ENCODE measurements at regions of chr1 and their contacts with region 1.

Region 1: GRCh38 chr1:84506002-84506728 is at the starts of genes GNG5 and SPATA1:
- DNase-seq: peak; percentile 91 to 97
- H3K4me3 ChIP-seq: peak within 1 kb of the TSS; percentile 81
- H3K27ac ChIP-seq: peak within 1 kb of the TSS; percentile 96
- H3K4me1 ChIP-seq: peaks cover 28% of the 10 kb centered on the region
- H3K27me3 ChIP-seq: no peaks in the 10 kb centered on the region
- CTCF ChIP-seq: no peak
- total RNA-seq, gene GNG5: 69.9 and 98.8 TPM in 2 replicates
- total RNA-seq, gene SPATA1: 1.9 and 2.8 TPM in 2 replicates

Region 2: DNA sequence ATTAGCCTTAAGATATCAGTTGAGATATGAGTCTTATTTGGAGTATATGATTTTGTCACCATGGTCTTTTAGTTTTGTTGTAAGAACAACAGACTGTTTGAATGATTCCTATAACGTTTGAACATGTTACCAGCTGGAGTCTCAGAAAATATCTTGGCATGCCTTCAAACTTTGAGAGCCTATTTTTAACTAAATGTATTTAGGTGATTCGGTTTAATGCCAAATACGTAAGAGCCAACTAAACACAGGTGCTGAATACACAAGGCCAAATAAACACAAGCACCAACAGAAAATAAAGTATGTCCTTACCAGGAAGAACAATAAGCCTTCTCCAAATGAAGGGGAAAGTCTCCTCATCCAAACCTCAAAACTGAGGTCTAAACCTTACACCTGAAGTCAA is 313.5 kb before region 1 on chr1:
- CTCF ChIA-PET with region 1: no interaction called
- POLR2A ChIA-PET with region 1: no interaction called
- intact Hi-C with region 1: no loop called
- DNase-seq: no peak
- H3K4me3 ChIP-seq: no peak overlapping the region
- H3K27ac ChIP-seq: no peak overlapping the region
- H3K4me1 ChIP-seq: no peaks in the 10 kb centered on the region
- H3K27me3 ChIP-seq: no peaks in the 10 kb centered on the region
- CTCF ChIP-seq: no peak

Region 3: DNA sequence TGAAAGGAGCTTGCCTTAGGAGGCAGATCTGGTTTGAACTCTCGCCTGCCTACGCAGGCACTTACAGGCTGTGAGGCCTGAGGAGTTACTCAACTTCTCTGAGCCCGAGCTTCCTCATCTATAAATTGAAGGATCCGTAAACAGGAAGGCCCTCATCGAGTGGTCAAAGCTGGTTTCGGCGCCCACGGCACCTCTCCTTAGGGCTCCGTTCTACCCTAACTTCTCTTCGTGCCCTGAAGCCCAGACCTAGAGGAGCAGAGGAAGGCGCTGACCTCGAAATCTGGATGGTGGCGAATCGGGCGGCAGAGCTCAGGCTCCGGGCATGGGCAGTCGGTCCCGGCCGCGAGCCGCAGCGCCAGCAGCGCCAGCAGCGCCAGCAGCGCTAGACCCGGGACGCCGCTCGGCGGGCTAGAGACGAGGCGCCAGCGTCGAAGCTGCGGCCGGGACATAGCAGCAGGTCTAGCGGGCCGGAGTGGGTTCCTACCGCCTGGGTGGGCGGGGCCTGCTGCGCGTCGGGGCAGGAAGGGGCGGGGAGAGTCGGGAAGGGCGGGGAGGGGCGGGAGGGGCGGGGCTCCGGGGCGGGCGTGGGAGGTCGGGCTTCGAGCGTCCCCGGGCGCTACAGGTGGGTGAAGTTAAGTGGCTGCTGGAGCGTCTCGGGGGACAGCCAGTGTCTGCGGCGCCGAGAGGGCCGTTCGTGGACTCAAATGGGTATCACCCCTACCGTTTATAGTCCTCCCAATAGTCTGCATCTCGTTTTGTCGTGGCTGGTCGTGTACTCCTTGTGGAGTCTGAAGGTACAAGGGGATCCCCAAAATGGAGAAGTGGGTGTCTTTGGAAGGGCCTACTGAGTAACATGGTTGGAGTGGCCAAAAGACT is 68.0 kb after region 1 on chr1 and contains the start of gene CTBS:
- CTCF ChIA-PET with region 1: no interaction called
- POLR2A ChIA-PET with region 1: interaction called, 14 read pairs
- intact Hi-C with region 1: loop called (anchors 1 kb)
- DNase-seq: peak; percentile 78 to 80
- H3K4me3 ChIP-seq: peak within 1 kb of the TSS; percentile 89
- H3K27ac ChIP-seq: peak within 1 kb of the TSS; percentile 94
- H3K4me1 ChIP-seq: peaks cover 26% of the 10 kb centered on the region
- H3K27me3 ChIP-seq: no peaks in the 10 kb centered on the region
- CTCF ChIP-seq: no peak
- total RNA-seq, gene CTBS: 17.5 and 20.2 TPM in 2 replicates

Region 4: DNA sequence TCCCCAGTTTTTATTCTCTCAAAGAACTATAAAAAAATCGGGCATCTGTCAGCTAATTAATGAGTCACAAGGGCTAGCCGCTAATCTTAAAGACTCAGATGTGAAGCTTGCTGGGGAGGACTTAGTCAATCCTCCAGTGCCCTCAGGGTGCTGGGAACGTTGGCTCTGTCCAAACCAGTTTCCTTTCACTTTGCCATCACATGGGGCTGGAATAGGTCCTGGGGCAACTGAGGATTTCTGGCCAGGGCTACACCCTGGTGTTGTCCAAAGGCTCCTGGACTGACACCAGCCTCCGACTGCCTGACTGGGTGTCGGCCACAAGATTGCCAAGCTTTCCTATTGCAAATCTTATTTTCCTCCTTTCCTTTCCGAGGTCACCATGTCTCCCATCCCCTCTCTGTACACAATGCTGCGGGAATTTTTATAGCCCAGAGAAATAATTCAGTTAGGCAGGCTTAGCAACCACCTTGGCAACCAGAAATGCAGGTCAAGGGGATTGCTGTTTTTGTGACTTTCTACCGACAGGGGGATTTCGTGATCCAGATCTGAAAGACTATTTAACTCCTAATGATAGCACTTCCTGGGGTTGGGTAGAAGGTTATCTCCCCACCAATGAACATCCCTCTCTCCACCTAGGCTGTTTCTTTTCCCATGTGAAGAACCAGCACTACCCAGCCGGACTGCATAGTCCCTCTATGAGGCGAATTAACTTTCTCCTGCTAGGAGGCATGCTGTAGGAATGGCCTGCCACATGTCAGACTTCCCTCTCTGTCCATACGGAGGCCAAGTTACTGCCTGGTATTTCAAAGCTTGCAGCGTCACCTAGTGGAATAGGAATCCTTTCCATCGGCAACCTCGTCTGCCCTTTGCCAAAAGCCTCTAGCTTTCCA is 98.0 kb after region 1 on chr1:
- CTCF ChIA-PET with region 1: no interaction called
- POLR2A ChIA-PET with region 1: no interaction called
- intact Hi-C with region 1: loop called (anchors 1 kb)
- DNase-seq: peak; percentile 74 to 97
- H3K4me3 ChIP-seq: peak overlapping the region; percentile 52
- H3K27ac ChIP-seq: peak overlapping the region; percentile 60
- H3K4me1 ChIP-seq: peaks cover 36% of the 10 kb centered on the region
- H3K27me3 ChIP-seq: no peaks in the 10 kb centered on the region
- CTCF ChIP-seq: peak; percentile 92

Region 5: GRCh38 chr1:84620720-84621313 is 114.7 kb after region 1 on chr1:
- CTCF ChIA-PET with region 1: interaction called, 3 read pairs
- POLR2A ChIA-PET with region 1: interaction called, 3 read pairs
- intact Hi-C with region 1: loop called (anchors 2 kb)
- DNase-seq: peak; percentile 56 to 86
- H3K4me3 ChIP-seq: peak overlapping the region; percentile 75
- H3K27ac ChIP-seq: peak overlapping the region; percentile 29
- H3K4me1 ChIP-seq: peaks cover 10% of the 10 kb centered on the region
- H3K27me3 ChIP-seq: no peaks in the 10 kb centered on the region
- CTCF ChIP-seq: peak; percentile 97

Region 6: DNA sequence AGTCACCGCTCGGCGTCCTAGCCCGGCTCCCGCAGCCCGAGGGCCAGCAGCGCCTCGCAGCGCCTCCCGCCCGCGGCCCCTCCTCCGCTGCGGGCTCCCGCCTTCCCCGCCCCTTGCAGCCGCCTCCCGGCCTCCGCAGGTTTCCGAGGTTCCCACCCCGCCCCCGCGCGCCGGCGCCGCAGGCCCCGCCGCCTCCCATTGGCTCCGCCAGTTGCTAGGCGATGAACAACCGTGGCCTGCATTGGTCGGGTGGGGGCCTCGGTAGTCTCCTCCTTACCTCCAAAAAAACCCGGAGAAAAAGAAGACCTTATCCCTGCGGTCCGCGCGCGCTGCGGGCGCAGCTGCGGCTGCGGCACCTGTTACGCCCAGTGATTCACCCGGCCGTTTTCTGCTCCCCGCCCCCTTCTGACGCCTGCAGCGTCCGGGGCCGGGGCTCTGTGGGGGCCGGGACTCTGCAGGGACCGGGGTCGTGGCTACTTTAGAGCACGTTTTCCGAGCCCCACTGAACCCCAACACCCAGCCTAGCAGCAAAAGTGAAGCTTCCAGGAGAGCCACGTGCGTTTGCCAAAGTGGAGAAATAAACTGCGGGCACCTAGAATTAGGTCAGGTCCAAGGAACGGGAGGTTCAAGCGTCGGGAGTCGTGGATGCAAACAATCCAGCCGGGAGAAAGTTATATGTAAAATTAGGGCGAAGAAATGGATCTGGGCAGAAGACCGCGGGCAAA is 184.4 kb after region 1 on chr1 and contains the start of gene SSX2IP:
- CTCF ChIA-PET with region 1: no interaction called
- POLR2A ChIA-PET with region 1: no interaction called
- intact Hi-C with region 1: loop called (anchors 5 kb)
- DNase-seq: peak; percentile 95 to 99
- H3K4me3 ChIP-seq: peak within 1 kb of the TSS; percentile 96
- H3K27ac ChIP-seq: peak within 1 kb of the TSS; percentile 72
- H3K4me1 ChIP-seq: peaks cover 23% of the 10 kb centered on the region
- H3K27me3 ChIP-seq: no peaks in the 10 kb centered on the region
- CTCF ChIP-seq: no peak
- total RNA-seq, gene SSX2IP: 16.4 and 20.7 TPM in 2 replicates